ENCODE measurements at regions of chr1 and their contacts with region 1.

Region 1: GRCh38 chr1:217590598-217590997 is 40.3 kb downstream of the GPATCH2 start:
- DNase-seq: peak; percentile 67
- ATAC-seq: peak; percentile 95
- H3K4me3 ChIP-seq: no peak overlapping the region
- H3K27ac ChIP-seq: no peak overlapping the region
- H3K4me1 ChIP-seq: peaks cover 12% of the 10 kb centered on the region
- H3K27me3 ChIP-seq: no peaks in the 10 kb centered on the region
- CTCF ChIP-seq: peak; percentile 39
- EP300 ChIP-seq: no peak
- POLR2A ChIP-seq: no peak
- RAD21 ChIP-seq: no peak

Region 2: DNA sequence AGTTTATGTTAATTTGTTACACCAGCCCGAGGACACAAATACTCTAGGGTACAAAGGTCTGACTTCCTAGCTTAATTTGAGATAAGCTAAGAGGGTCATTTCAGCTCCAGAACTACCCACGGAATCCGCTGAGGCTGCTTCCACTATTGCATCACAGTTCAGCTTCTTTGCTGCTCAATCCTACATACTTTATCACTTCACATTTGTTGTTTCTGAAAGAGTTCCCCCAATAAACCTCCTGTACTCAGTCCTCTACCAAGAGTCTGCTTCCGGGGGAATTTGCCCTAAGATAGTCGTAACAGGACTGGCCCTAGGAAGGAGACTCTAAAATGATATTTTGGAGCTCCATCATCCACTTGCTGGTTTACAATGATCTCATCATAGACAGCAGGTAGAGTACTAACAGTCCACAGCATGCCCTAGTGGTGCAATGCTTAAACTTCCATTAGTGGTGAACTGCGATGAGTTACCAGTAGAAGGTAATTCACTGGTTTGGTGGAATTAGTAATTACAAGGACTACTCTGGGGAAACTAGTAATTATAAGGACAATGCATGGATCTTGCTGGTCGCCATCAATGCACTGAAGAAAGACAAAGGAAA is 1396.7 kb before region 1 on chr1:
- CTCF ChIA-PET with region 1: no interaction called
- POLR2A ChIA-PET with region 1: no interaction called
- in situ Hi-C with region 1: no loop called
- intact Hi-C with region 1: loop called (anchors 10 kb)
- DNase-seq: no peak
- ATAC-seq: peak; percentile 83
- H3K4me3 ChIP-seq: no peak overlapping the region
- H3K27ac ChIP-seq: no peak overlapping the region
- H3K4me1 ChIP-seq: no peaks in the 10 kb centered on the region
- H3K27me3 ChIP-seq: no peaks in the 10 kb centered on the region
- CTCF ChIP-seq: no peak
- EP300 ChIP-seq: no peak
- POLR2A ChIP-seq: no peak
- RAD21 ChIP-seq: no peak

Region 3: DNA sequence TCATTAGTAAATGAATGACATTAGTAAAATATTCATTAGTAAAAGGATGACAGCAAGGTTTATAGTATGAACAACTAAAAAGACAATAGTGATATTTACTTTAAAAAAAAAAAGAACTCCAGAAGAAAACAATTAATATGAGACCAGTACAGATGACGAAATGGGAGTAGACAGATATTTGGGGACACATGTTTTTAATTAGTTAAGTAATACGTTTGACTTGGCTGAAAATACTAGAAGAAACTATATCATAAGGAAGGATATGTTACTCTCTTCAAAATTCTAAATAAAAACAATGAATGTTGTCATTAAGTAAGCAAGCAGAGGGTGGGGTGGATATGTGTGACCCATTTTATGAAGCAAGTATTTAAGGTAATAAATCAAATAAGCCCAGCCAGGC is 21.6 kb before region 1 on chr1:
- CTCF ChIA-PET with region 1: no interaction called
- POLR2A ChIA-PET with region 1: no interaction called
- in situ Hi-C with region 1: no loop called
- intact Hi-C with region 1: no loop called
- DNase-seq: no peak
- ATAC-seq: no peak
- H3K4me3 ChIP-seq: no peak overlapping the region
- H3K27ac ChIP-seq: no peak overlapping the region
- H3K4me1 ChIP-seq: peaks cover 18% of the 10 kb centered on the region
- H3K27me3 ChIP-seq: no peaks in the 10 kb centered on the region
- CTCF ChIP-seq: no peak
- EP300 ChIP-seq: no peak
- POLR2A ChIP-seq: no peak
- RAD21 ChIP-seq: no peak

Region 4: DNA sequence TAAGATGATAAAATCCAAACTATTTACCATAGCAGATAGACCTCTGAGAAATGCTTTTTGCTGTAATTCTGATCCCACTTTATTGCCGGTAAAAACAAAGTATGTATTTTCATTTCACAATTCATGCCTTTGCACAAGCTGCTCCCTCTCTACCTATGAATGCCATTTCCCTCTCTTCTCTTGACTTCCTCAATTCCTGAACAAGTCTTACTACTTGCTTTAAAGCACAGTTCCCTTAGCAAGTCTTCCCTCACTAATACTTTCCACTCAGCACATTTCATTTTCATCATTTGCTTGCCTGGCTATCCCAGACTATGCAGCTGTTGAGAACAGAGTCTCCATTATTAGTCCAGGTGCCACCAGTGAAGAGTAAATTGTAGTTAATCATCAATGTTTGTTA is 26.5 kb after region 1 on chr1:
- CTCF ChIA-PET with region 1: no interaction called
- POLR2A ChIA-PET with region 1: no interaction called
- in situ Hi-C with region 1: no loop called
- intact Hi-C with region 1: no loop called
- DNase-seq: peak; percentile 5
- ATAC-seq: peak; percentile 31; the same call in 1 of the 3 replicates
- H3K4me3 ChIP-seq: no peak overlapping the region
- H3K27ac ChIP-seq: no peak overlapping the region
- H3K4me1 ChIP-seq: peaks cover 12% of the 10 kb centered on the region
- H3K27me3 ChIP-seq: no peaks in the 10 kb centered on the region
- CTCF ChIP-seq: no peak
- EP300 ChIP-seq: no peak
- POLR2A ChIP-seq: no peak
- RAD21 ChIP-seq: no peak

Region 5: GRCh38 chr1:217630711-217631591 is 40.4 kb after region 1 on chr1 and contains the starts of genes GPATCH2 and SPATA17:
- CTCF ChIA-PET with region 1: no interaction called
- POLR2A ChIA-PET with region 1: interaction called, 4 read pairs
- in situ Hi-C with region 1: no loop called
- intact Hi-C with region 1: loop called (anchors 5 kb)
- DNase-seq: peak; percentile 86
- ATAC-seq: peak; percentile 97
- H3K4me3 ChIP-seq: peak within 1 kb of the TSS; percentile 84 to 95 (median 88)
- H3K27ac ChIP-seq: peak within 1 kb of the TSS; percentile 97
- H3K4me1 ChIP-seq: peaks cover 33% of the 10 kb centered on the region
- H3K27me3 ChIP-seq: no peaks in the 10 kb centered on the region
- CTCF ChIP-seq: peak; percentile 20; the same call in 1 of the 2 replicates
- EP300 ChIP-seq: no peak
- POLR2A ChIP-seq: peak; percentile 68 to 82
- RAD21 ChIP-seq: peak; percentile 42; the same call in 1 of the 2 replicates
- total RNA-seq, gene GPATCH2: 15.7 and 19.4 TPM in 2 replicates
- total RNA-seq, gene SPATA17: 1.6 and 1.7 TPM in 2 replicates

Region 6: GRCh38 chr1:217660353-217661062 is 69.9 kb after region 1 on chr1:
- CTCF ChIA-PET with region 1: no interaction called
- POLR2A ChIA-PET with region 1: no interaction called
- in situ Hi-C with region 1: no loop called
- intact Hi-C with region 1: no loop called
- DNase-seq: peak; percentile 8
- ATAC-seq: no peak; the same call in 2 of the 3 replicates
- H3K4me3 ChIP-seq: no peak overlapping the region
- H3K27ac ChIP-seq: no peak overlapping the region
- H3K4me1 ChIP-seq: no peaks in the 10 kb centered on the region
- H3K27me3 ChIP-seq: no peaks in the 10 kb centered on the region
- CTCF ChIP-seq: peak; percentile 64
- EP300 ChIP-seq: no peak
- POLR2A ChIP-seq: no peak
- RAD21 ChIP-seq: no peak

Measured in HepG2 (cell line).